ENCODE measurements at regions of chr6 and their contacts with region 1.

Region 1: DNA sequence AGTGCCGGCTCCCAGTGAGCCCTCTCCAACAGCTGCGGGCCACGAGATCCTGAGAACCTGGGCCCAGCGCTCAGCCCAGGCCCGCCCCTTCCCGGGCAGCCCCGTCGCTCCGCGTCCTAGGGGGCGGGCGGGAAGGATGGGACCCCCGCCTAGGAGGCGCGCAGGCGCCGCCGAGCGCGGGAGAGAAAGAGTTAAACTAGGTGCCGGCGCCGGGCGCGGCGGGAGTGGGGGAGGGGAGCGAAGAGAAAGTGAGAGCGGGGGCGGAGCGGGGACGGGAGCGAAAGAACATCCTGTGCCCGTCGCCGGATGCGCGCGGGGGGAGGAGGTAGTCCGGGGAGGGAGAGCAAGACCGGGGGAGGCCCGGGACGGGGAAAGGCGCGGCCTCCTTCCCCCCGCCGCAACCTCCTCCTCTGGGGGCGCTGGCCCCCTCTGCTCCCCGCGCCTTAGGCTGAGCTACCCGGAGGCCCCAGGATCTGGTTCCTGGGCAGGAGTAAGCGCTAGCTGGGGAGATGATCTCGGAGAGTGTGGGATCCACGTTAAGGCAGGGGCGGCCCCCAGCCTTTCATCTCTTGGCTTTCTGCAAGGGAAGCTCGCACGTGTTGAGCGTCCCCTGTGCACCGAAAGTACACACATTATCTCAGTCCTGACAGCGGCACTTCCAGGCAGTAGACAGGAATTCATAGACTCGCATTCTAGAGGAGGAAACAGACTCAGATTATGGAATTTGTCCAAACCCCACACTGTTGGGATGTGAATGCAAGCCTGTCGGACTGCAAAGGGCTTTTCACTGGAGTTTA is 4.9 kb upstream of the ARMC12 start:
- DNase-seq: peak; percentile 99
- H3K4me3 ChIP-seq: peak overlapping the region; percentile 49 to 79 (median 65)
- H3K27ac ChIP-seq: peak overlapping the region; percentile 96 to 100 (median 98)
- H3K4me1 ChIP-seq: peaks cover 5 to 81% (median 73%) of the 10 kb centered on the region in 4 donors
- H3K27me3 ChIP-seq: no peaks in the 10 kb centered on the region
- CTCF ChIP-seq: no peak
- EP300 ChIP-seq: peak; percentile 95 to 98 (median 98)
- POLR2A ChIP-seq: peak in 1 of 2 donors; percentile 51

Region 2: DNA sequence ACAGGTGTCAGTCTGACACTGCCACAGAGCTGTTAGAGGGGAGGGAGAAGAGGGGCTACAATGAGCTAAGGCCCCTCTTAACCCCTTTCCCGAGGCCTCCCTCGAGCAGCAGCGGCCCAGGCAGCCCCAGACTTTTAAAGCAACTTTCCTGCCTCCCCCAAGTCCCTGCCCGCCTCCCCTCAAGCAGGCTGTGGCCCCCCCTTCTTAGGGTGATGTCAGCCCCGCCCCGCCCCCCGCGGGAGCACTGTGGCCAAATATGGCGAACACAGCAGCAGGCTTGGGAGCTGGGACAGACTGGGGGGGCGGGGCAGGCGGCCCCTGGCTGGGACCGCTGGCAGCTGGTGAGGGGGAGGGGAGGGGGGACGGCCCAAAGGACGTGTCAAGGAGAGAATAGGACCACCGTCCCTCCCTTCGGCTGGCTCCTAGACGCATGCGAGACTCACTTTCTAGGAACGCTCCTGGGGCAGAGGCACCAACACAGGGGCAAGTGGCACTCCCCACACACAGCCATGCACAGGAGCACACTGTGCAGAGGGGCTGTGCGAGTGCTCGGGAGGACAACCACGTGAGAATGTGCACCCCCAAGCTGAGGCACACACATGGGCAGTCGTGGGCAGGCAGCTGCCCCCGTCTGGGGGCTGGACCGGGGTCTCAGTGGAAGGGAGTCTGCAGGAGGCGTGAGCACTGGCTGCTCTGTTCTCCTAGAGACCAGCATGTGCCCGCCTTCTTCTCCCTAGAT is 241.8 kb before region 1 on chr6:
- intact Hi-C with region 1: loop called (anchors 2 kb)
- DNase-seq: peak; percentile 98
- H3K4me3 ChIP-seq: peak overlapping the region; percentile 19 to 99 (median 98)
- H3K27ac ChIP-seq: peak overlapping the region; percentile 100
- H3K4me1 ChIP-seq: peaks cover 0 to 100% (median 99%) of the 10 kb centered on the region in 4 donors
- H3K27me3 ChIP-seq: no peaks in the 10 kb centered on the region
- CTCF ChIP-seq: no peak
- EP300 ChIP-seq: peak in 2 of 4 donors; percentile 74 to 75
- POLR2A ChIP-seq: peak; percentile 8 to 39

Region 3: GRCh38 chr6:35583893-35584688 is 147.8 kb before region 1 on chr6:
- intact Hi-C with region 1: loop called (anchors 1 kb)
- DNase-seq: peak; percentile 89
- H3K4me3 ChIP-seq: no peak overlapping the region
- H3K27ac ChIP-seq: peak overlapping the region; percentile 44 to 94 (median 77)
- H3K4me1 ChIP-seq: peaks cover 0 to 57% (median 43%) of the 10 kb centered on the region in 4 donors
- H3K27me3 ChIP-seq: no peaks in the 10 kb centered on the region
- CTCF ChIP-seq: peak; percentile 75 to 86 (median 77)
- EP300 ChIP-seq: no peak
- POLR2A ChIP-seq: no peak

Region 4: GRCh38 chr6:35688581-35689322 is 43.2 kb before region 1 on chr6 and contains the start of gene FKBP5:
- intact Hi-C with region 1: loop called (anchors 1 kb)
- DNase-seq: peak; percentile 99
- H3K4me3 ChIP-seq: peak within 1 kb of the TSS; percentile 75 to 100 (median 90)
- H3K27ac ChIP-seq: peak within 1 kb of the TSS; percentile 97 to 100 (median 98)
- H3K4me1 ChIP-seq: peaks cover 0 to 51% (median 43%) of the 10 kb centered on the region in 4 donors
- H3K27me3 ChIP-seq: no peaks in the 10 kb centered on the region
- CTCF ChIP-seq: no peak
- EP300 ChIP-seq: no peak
- POLR2A ChIP-seq: peak in 1 of 2 donors; percentile 62
- total RNA-seq, gene FKBP5: 200 to 326 (median 258) TPM

Region 5: DNA sequence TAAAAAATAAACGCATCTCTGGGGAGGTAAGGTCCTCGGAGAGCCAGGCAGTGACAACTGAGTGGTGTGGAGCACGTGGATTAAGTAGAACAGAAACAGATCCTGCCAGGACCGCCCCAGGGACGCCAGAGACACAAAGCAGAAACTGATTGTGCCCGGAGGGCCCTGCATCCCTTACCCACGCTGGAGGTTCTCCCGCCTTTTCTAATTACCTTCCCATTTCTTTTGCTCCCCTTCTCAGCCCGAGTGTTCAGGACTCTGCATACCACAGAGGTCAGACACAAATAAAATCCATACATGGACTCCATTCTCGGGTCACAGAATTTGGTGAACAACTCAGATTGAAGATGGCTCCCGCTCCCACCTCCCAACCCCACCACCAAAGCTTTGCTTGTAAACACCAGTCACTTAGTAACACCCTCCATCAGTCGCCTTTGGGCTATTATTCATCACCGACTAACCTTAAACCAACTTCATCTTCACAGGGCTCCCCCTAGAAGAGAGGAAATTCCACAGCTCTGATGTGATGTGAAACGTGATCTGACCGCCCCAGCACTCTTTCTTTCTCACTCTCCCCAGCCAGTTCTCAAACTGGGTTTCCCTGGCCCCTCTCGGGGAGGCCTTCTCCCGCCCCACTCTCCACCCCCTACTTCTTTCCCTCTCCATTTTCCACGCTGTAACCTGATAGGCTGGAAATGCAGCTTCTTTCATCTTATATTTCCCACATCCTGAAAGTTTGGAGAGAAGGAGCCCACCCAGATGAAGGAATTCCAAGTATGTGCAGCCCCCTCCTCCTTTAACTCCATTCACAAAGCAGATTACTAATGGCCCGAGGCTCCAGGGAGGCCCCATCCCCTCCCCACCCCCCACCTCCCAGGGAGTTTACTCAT is 1405.5 kb after region 1 on chr6:
- intact Hi-C with region 1: loop called (anchors 5 kb)
- DNase-seq: peak; percentile 89
- H3K4me3 ChIP-seq: peak overlapping the region in 2 of 4 donors; percentile 4 to 5
- H3K27ac ChIP-seq: peak overlapping the region; percentile 86 to 97 (median 93)
- H3K4me1 ChIP-seq: peaks cover 0 to 90% (median 55%) of the 10 kb centered on the region in 4 donors
- H3K27me3 ChIP-seq: no peaks in the 10 kb centered on the region
- CTCF ChIP-seq: no peak
- EP300 ChIP-seq: peak in 1 of 4 donors; percentile 74
- POLR2A ChIP-seq: no peak

Measured in sigmoid colon (tissue), 7 donors.